Posterior vena cava (tissue), 2 donors: ENCODE measurements at regions of chr6 and their contacts with region 1.

Region 1: DNA sequence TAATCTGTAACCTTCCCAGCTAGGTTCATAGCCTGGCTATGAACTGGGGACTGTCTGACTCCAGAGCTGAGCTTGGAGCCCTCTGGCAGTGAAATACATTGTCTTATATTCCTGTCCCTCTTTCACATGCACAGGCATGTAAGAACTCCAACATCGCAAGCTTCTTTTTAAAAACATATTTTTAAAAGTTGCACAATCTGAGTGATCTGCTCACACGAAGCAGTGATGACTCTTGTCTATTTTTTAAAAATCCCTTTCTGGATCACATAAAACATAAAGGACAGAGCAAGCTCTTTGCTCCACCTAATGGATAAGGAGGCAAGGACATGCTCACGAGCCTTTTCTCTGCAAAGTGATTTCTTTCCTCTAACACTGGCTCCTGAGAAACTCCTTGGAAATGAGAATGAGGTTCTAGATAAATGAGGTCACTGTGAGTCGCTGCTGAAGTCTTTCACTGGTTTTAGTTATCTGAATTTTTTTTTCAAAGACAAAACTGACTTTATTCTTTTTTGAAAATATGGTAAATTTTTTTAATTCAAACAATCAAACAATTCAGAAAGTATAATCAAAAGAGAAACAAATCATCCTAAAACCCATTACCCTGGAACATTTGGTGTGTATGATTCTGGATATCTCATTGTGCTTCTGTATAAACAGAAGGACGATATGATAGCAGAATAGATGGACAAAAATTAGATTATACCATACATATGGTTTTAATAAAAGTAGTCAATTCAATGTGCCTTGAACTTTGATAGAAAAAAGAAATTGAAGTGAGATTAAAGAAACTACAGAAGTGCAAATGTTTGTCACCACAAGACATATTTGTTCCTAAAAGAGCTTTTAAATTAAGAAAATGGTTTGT is 30.8 kb downstream of the IL20RA start:
- DNase-seq: no peak

Region 2: GRCh38 chr6:137000825-137001224 is 13.1 kb before region 1 on chr6:
- intact Hi-C with region 1: loop called in 1 of 2 experiments (anchors 1 kb)
- DNase-seq: no peak